H1 (cell line): ENCODE measurements at regions of chr5 and their contacts with region 1.

Region 1: DNA sequence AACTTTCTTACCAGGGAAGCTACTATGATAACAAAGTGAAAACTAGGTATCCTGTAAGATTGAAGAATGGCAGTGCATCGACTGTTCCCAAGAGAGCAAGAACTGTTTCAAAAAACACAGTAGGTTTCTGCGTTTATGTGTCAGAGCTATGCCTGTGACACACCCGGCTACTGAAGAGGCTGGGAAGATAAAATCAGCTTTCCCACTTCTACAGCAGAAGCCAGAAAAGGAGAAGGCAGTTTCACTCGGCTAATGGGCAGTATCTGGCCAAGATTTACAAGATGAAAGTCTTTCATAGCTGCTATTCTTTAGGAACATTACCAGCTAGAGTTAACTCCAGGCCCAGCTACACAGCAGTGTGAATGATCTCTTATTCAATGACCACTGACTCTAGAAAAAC is 195.2 kb downstream of the CTNND2 start:
- DNase-seq: no peak
- H3K4me3 ChIP-seq: no peak overlapping the region
- H3K27ac ChIP-seq: no peak overlapping the region
- H3K4me1 ChIP-seq: no peaks in the 10 kb centered on the region
- H3K27me3 ChIP-seq: peaks cover 0 to under 1% (median 0%) of the 10 kb centered on the region in 4 experiments; a peak in 1 of 7 replicates
- CTCF ChIP-seq: no peak
- EP300 ChIP-seq: no peak
- POLR2A ChIP-seq: no peak
- RAD21 ChIP-seq: no peak

Region 2: GRCh38 chr5:11719888-11720481 is 11.0 kb after region 1 on chr5:
- CTCF ChIA-PET with region 1: interaction called, 24 read pairs
- POLR2A ChIA-PET with region 1: no interaction called
- DNase-seq: peak in 1 of 2 experiments; percentile 73
- H3K4me3 ChIP-seq: no peak overlapping the region
- H3K27ac ChIP-seq: no peak overlapping the region
- H3K4me1 ChIP-seq: no peaks in the 10 kb centered on the region
- H3K27me3 ChIP-seq: no peaks in the 10 kb centered on the region
- CTCF ChIP-seq: peak in 2 of 3 experiments; percentile 71 to 82; a peak in 3 of 4 replicates
- EP300 ChIP-seq: no peak
- POLR2A ChIP-seq: no peak
- RAD21 ChIP-seq: peak; percentile 84 to 88

Region 3: GRCh38 chr5:11733185-11734184 is 24.5 kb after region 1 on chr5:
- CTCF ChIA-PET with region 1: no interaction called
- POLR2A ChIA-PET with region 1: no interaction called
- DNase-seq: no peak
- H3K4me3 ChIP-seq: no peak overlapping the region
- H3K27ac ChIP-seq: no peak overlapping the region
- H3K4me1 ChIP-seq: no peaks in the 10 kb centered on the region
- H3K27me3 ChIP-seq: no peaks in the 10 kb centered on the region
- CTCF ChIP-seq: no peak
- EP300 ChIP-seq: no peak
- POLR2A ChIP-seq: no peak
- RAD21 ChIP-seq: no peak